ENCODE measurements at regions of chr6 and their contacts with region 1.

Region 1: DNA sequence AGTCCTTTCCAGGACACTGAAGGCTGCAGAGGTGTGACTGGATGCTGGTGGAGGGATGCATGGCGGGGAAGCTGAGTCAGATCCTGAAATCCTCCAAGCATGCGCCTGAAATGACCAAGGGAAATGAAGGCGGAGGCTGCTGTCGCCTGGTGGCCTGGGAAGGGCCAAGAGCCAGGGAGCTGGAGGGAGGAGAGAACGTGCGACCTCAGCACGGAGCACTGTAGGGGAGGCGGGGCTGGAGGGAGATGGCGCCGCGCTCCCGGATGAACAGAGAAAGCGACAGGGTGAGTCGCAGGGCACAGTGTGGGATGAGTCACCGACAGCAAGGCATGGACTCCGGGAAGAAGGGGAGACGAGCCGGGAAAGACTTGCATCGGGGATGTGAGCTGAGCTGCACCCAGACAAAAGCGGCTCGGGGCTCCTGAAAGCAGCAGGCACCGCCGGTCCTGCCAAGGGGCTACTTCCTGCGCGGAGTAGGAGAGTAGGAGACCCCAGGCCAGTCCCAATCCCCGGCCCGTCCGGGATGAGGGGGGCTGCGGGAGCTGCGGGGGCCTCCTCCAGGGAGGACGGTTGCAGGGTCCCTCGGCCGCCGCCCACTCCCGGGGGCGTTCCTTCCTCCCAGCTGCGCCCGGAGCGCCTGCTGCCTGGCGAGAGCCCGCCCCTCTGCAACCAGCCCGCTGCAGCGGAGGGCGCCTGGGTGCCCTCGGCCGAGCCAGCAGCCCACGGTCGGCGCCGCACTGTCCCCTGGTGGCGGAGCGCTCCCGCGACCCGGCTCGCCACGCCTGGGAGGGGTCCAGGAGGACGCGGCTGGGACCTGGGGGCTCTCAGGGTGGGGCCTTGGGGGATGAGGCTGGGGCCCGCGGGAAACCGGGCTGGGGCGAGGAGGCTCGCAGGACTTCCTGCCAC is 11.0 kb upstream of the NQO2 start:
- DNase-seq: peak; percentile 89
- H3K4me3 ChIP-seq: peak overlapping the region; percentile 50 to 70 (median 67)
- H3K27ac ChIP-seq: peak overlapping the region; percentile 94 to 98 (median 98)
- H3K4me1 ChIP-seq: peaks cover 6 to 9% of the 10 kb centered on the region in 2 donors
- H3K27me3 ChIP-seq: no peaks in the 10 kb centered on the region
- CTCF ChIP-seq: peak; percentile 55 to 97 (median 92)
- POLR2A ChIP-seq: peak in 1 of 2 donors; percentile 70

Region 2: DNA sequence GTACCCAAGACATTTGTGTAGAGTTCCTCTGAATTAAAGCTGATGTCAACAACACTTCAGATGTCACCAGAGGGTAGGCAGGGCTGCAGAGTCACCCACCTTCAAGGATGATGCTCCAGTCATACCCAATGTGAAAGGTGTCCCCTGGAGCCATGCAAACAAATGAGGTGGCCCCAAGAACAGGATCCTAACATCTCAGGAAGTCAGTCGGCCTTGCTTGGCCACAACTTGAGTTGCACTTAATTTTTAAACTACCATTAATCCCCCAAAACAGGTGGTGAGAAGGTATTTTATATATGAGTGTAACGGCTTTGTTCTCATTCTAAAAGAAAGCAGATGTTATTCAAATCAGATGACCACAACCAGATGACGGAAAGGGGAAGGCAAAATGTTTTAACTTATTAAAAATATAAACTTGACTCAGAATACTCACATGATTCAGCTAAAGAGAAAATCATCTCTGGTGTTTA is 125.9 kb before region 1 on chr6:
- intact Hi-C with region 1: no loop called
- DNase-seq: no peak
- H3K4me3 ChIP-seq: no peak overlapping the region
- H3K27ac ChIP-seq: no peak overlapping the region
- H3K4me1 ChIP-seq: peaks cover 0 to 17% of the 10 kb centered on the region in 2 donors
- H3K27me3 ChIP-seq: no peaks in the 10 kb centered on the region
- CTCF ChIP-seq: no peak
- POLR2A ChIP-seq: no peak

Region 3: DNA sequence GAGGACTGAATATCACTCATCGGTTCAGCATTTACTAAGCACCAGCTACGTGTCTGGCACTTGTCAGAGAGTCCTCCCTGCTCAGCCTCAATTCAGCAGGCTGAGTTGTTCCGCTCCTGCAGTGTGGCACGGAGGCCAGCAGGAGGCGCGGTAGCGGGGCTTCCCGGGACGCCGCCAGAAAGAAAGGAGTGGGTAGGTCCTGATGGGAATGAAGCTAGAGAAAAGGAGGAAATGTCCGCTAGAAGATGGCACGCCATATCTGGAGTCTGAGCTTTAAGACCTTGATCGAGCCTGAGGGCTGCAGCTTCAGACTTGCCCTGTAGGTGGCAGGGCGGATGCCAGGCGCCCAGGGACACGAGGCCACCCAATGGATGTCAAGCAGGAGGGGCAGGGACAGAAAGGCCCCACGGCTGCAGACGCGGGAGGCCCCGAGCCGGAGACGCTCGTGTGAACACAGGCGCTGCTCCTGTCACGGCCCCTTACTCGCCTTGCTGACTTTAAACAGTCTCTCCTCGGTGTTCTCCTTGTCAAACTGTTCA is 36.1 kb before region 1 on chr6:
- intact Hi-C with region 1: loop called (anchors 5 kb)
- DNase-seq: peak; percentile 79 to 84
- H3K4me3 ChIP-seq: no peak overlapping the region
- H3K27ac ChIP-seq: peak overlapping the region in 2 of 3 donors; percentile 44 to 72
- H3K4me1 ChIP-seq: peaks cover 10 to 15% of the 10 kb centered on the region in 2 donors
- H3K27me3 ChIP-seq: no peaks in the 10 kb centered on the region
- CTCF ChIP-seq: peak; percentile 89 to 97 (median 94)
- POLR2A ChIP-seq: peak in 1 of 2 donors; percentile 24

Measured in thyroid gland (tissue), 4 donors.